Cardiac septum (tissue), 1 donor: ENCODE measurements at regions of chr11 and their contacts with region 1.

Region 1: DNA sequence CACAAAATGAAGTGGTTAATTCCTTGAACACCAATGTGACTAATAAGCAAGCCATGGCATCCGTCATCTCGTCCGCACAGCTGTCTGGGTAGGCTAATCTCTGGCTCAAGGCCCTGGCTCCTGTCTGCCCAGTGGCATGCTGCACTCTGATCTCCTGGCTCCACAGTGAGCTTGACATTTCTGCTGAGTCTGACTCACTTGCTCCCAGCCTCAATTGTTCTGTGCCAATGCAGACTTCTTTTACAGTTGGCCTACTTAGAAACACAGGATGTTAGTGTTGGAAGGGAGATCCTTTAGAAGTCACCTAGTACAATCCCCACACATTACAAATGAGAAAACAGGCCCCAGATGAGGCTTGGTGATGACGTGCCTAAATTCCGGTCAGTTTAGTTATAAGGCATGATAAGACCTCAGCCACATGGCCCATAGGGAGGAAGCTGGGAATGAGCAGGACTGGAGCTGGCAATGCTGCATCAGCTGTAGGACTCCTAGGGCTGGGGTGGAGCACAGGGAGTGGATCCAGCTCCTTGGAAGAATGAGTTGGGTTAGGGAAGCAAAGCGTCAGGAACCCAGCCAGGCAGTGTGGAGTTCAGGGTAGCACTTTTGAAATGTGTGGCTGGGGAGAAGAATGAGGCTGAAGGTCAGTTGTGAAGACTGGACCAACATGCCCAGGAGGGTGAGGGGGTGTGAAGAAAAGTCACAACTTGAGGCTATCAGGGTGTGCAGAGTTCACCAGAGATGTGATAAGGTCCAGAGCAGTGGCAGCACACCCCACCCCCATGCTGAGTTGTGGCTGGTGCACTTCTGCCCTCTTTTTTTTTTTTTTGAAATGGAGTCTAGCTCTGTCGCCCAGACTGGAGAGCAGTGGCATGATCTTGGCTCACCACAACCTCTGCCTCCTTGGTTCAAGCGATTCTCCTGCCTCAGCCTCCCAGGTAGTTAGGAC is 70.2 kb upstream of the EED start:
- DNase-seq: peak; percentile 90

Region 2: GRCh38 chr11:85826116-85826855 is 348.1 kb before region 1 on chr11:
- intact Hi-C with region 1: no loop called
- DNase-seq: no peak

Region 3: GRCh38 chr11:86151174-86152005 is 23.0 kb before region 1 on chr11:
- intact Hi-C with region 1: loop called (anchors 1 kb)
- DNase-seq: peak; percentile 71